RWPE1 (cell line): ENCODE measurements at regions of chr20 and their contacts with region 1.

Region 1: GRCh38 chr20:23441850-23442313 is 2.4 kb downstream of the CSTL1 start:
- DNase-seq: peak; percentile 83
- H3K27ac ChIP-seq: no peak overlapping the region
- CTCF ChIP-seq: peak; percentile 93

Region 2: DNA sequence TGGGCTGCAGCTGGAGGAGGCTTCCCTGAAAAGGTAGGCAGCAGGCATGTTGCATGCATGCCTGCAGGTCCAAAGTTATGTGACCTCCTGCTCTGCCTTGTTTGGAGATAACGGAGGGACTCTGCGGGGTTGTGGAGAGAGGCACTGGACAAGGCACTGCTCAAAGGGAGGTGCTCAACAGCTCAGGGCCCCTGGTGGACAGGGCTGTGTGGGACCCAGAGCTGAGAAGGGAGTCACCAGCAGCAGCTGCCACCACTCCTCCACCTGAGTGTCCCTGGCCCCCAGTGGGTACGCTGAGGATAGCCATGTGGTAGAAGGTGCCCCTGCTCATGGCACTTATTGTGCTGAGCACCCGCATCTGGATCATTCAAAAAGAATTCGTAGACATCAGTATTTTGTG is 33.5 kb after region 1 on chr20:
- CTCF ChIA-PET with region 1: no interaction called
- POLR2A ChIA-PET with region 1: no interaction called
- DNase-seq: no peak
- H3K27ac ChIP-seq: no peak overlapping the region
- CTCF ChIP-seq: no peak

Region 3: DNA sequence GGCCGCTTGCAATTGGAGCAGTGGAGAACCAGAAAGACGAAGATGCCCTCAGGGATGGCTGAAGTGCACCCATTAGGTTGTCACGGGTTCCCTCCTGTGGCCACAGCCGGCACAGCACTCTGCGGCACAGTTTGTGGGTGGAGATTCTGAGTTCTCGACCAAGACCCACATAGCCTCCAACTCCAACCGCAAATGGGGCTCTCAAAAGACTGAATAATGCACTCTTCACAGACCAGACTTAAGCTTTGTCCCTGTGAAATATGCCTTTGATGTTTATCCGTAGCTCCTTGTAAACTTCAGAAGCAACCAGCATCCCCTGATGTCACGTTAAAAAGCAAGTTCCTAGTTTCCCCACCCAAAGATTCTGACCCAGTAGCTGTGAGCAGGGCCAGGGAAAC is 164.8 kb after region 1 on chr20:
- CTCF ChIA-PET with region 1: interaction called, 21 read pairs
- POLR2A ChIA-PET with region 1: no interaction called
- DNase-seq: peak; percentile 93
- H3K27ac ChIP-seq: no peak overlapping the region
- CTCF ChIP-seq: peak; percentile 97